Activated B cell treated with CpG ODN at 0.5 μM for 24 hours (primary cell): ENCODE measurements at regions of chr17 and their contacts with region 1.

Region 1: GRCh38 chr17:73231841-73232586 is 29.7 kb downstream of the CPSF4L start:
- DNase-seq: peak; percentile 97
- ATAC-seq: peak; percentile 95
- H3K4me3 Mint-ChIP-seq: peak overlapping the region; percentile 93
- H3K27ac Mint-ChIP-seq: peak overlapping the region; percentile 97
- H3K4me1 Mint-ChIP-seq: peaks cover 54% of the 10 kb centered on the region
- H3K27me3 Mint-ChIP-seq: no peaks in the 10 kb centered on the region
- CTCF ChIP-seq: no peak

Region 2: GRCh38 chr17:73132085-73132492 is 99.9 kb before region 1 on chr17:
- CTCF ChIA-PET with region 1: no interaction called
- POLR2A ChIA-PET with region 1: interaction called, 3 read pairs
- intact Hi-C with region 1: loop called (anchors 1 kb)
- DNase-seq: peak; percentile 18
- ATAC-seq: peak; percentile 98
- H3K4me3 Mint-ChIP-seq: peak overlapping the region; percentile 44
- H3K27ac Mint-ChIP-seq: peak overlapping the region; percentile 14
- H3K4me1 Mint-ChIP-seq: peaks cover 19% of the 10 kb centered on the region
- H3K27me3 Mint-ChIP-seq: peaks cover 3% of the 10 kb centered on the region
- CTCF ChIP-seq: no peak

Region 3: GRCh38 chr17:73311781-73312641 is 80.0 kb after region 1 on chr17 and contains the start of gene CDC42EP4:
- CTCF ChIA-PET with region 1: no interaction called
- POLR2A ChIA-PET with region 1: no interaction called
- intact Hi-C with region 1: loop called (anchors 2 kb)
- DNase-seq: peak; percentile 76
- ATAC-seq: peak; percentile 91
- H3K4me3 Mint-ChIP-seq: peak within 1 kb of the TSS; percentile 84
- H3K27ac Mint-ChIP-seq: no peak within 1 kb of the TSS
- H3K4me1 Mint-ChIP-seq: peaks cover 19% of the 10 kb centered on the region
- H3K27me3 Mint-ChIP-seq: no peaks in the 10 kb centered on the region
- CTCF ChIP-seq: no peak
- total RNA-seq, gene CDC42EP4: 0.61 and 0.95 TPM in 2 replicates